ENCODE measurements at regions of chrX and their contacts with region 1.

Region 1: GRCh38 chrX:50100188-50100587 is 100.6 kb downstream of the AKAP4 start:
- DNase-seq: peak; percentile 42
- H3K4me3 ChIP-seq: no peak overlapping the region
- H3K27ac ChIP-seq: no peak overlapping the region
- H3K4me1 ChIP-seq: no peaks in the 10 kb centered on the region
- H3K27me3 ChIP-seq: no peaks in the 10 kb centered on the region
- CTCF ChIP-seq: peak; percentile 55

Region 2: DNA sequence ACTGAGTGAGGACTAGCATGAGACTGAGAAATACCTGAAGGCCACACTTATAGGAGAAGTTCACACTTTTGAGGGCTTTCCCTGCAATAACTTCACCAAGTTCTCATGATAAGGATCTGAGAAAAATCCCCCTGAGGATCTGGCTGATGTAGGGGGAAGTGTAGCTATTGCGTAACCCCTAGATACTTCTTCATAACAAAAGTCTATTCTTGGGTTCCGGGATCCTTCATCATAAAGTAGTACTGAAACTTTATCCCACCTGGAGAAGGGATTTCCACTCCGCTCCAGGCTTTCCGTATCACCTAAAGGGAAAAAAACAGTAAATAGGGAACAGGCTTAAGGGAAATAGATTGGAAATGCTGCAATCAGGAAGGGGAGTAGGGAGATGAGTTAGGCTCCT is 207.6 kb before region 1 on chrX:
- CTCF ChIA-PET with region 1: no interaction called
- POLR2A ChIA-PET with region 1: no interaction called
- intact Hi-C with region 1: no loop called
- DNase-seq: peak; percentile 10
- H3K4me3 ChIP-seq: no peak overlapping the region
- H3K27ac ChIP-seq: no peak overlapping the region
- H3K4me1 ChIP-seq: no peaks in the 10 kb centered on the region
- H3K27me3 ChIP-seq: no peaks in the 10 kb centered on the region
- CTCF ChIP-seq: no peak

Region 3: GRCh38 chrX:50168241-50168687 is 68.1 kb after region 1 on chrX:
- CTCF ChIA-PET with region 1: no interaction called
- POLR2A ChIA-PET with region 1: no interaction called
- intact Hi-C with region 1: no loop called
- DNase-seq: peak; percentile 18
- H3K4me3 ChIP-seq: no peak overlapping the region
- H3K27ac ChIP-seq: no peak overlapping the region
- H3K4me1 ChIP-seq: no peaks in the 10 kb centered on the region
- H3K27me3 ChIP-seq: no peaks in the 10 kb centered on the region
- CTCF ChIP-seq: no peak

Region 4: GRCh38 chrX:50579955-50580354 is 479.8 kb after region 1 on chrX:
- CTCF ChIA-PET with region 1: interaction called, 3 read pairs
- POLR2A ChIA-PET with region 1: no interaction called
- intact Hi-C with region 1: loop called (anchors 5 kb)
- DNase-seq: peak; percentile 80
- H3K4me3 ChIP-seq: no peak overlapping the region
- H3K27ac ChIP-seq: no peak overlapping the region
- H3K4me1 ChIP-seq: no peaks in the 10 kb centered on the region
- H3K27me3 ChIP-seq: no peaks in the 10 kb centered on the region
- CTCF ChIP-seq: peak; percentile 75

Region 5: GRCh38 chrX:50680990-50681389 is 580.8 kb after region 1 on chrX:
- CTCF ChIA-PET with region 1: no interaction called
- POLR2A ChIA-PET with region 1: no interaction called
- intact Hi-C with region 1: loop called (anchors 5 kb)
- DNase-seq: peak; percentile 68
- H3K4me3 ChIP-seq: no peak overlapping the region
- H3K27ac ChIP-seq: peak overlapping the region; percentile 64
- H3K4me1 ChIP-seq: peaks cover 21% of the 10 kb centered on the region
- H3K27me3 ChIP-seq: peaks cover under 1% of the 10 kb centered on the region
- CTCF ChIP-seq: peak; percentile 71

Region 6: DNA sequence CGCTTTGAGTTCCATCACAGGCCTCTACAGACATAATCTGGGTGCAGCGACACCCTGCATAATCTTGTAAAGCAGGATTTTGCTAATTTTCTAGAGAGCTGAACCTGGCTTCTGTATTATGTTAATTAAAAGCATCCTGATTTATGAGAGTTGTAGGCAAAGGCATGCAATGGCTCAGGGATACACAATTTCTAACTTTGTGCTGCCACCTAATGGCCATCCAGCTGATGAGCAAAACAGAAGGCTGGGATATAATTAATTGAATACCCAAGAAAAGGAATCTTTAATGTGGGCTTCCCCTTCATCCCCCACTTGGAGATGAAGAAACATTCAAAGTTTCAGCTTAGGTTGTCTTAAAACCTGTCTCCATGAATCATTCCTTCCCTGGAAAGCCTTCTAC is 888.5 kb after region 1 on chrX:
- CTCF ChIA-PET with region 1: no interaction called
- POLR2A ChIA-PET with region 1: no interaction called
- intact Hi-C with region 1: loop called (anchors 5 kb)
- DNase-seq: peak; percentile 67
- H3K4me3 ChIP-seq: no peak overlapping the region
- H3K27ac ChIP-seq: no peak overlapping the region
- H3K4me1 ChIP-seq: no peaks in the 10 kb centered on the region
- H3K27me3 ChIP-seq: no peaks in the 10 kb centered on the region
- CTCF ChIP-seq: peak; percentile 75